GM10248 (cell line): ENCODE measurements at regions of chr19 and their contacts with region 1.

Region 1: GRCh38 chr19:12847159-12848139 is 9.1 kb downstream of the MAST1 start:
- DNase-seq: peak; percentile 93
- CTCF ChIP-seq: peak; percentile 99

Region 2: DNA sequence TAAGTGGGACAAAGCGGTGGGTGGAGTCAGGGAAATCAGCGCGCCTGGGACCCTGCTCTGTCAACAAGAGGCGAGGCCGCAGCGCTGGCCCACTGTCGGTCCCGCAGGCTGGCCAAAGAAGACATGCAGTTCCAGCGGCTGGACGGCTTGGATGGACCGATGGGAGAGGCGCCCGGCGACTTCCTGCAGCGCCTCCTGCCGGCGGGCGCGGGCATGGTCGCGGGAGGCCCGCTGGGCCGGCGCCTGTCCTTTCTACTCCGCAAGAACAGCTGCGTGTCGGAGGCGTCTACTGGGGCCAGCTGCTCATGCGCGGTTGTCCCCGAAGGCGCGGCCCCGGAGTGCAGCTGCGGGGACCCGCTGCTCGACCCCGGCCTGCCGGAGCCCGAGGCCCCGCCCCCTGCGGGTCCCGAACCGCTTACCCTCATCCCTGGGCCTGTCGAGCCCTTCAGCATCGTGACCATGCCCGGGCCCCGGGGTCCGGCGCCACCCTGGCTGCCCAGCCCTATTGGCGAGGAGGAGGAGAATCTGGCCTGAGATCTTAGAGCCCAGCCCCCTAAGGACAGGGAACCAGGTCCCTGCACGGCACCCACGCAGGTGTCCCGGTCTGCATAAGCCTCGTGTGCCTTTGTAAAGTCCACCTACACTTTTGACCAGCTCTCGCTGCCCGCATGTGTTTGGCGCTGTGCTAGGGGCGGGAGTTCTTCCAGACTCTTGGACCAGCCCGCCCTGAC is 89.7 kb before region 1 on chr19:
- CTCF ChIA-PET with region 1: interaction called, 369 read pairs
- POLR2A ChIA-PET with region 1: no interaction called
- DNase-seq: peak; percentile 85
- CTCF ChIP-seq: peak; percentile 82

Region 3: DNA sequence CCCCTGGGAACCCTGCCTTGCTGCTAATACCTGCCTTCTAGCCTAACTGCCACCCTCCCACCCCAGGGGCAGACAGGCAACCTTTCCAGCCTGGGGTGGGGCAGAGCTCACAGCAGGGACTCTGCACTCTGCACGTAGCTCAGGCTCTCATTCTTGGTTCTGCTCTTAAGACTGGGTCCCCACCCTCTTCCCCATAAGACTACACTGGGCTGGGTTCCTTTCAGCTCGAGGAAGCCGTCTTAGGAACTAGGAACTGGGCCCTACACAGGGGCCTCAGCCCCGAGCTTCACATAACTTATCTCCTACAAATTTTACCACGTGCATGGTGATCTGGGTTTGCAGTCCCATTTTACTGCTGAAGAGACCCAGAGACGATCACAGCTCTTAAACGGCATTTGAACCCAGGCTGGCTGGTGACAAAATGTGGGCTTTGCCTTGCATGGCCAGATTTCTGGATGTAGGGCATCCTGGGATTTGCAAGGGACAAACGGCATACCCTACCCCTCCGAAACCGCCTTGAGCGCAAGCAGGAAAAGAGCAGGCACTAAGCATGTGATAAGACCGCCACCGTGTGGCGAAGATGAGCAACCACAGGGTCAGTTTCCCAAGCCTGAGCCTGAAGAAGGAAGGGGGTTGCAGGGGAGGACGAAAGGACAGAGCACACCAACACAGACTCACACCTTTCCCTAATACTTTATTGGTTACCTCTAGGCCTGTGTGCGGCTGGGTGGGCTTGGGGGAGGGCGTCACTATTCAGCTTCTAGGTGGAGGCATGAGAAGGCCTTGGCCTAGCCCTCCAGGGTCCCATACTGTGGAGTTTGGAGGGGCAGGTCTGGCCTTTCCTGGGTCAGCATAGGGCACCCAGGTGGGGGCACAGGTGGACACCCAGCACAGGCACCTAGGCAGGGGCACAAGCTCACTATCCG is 51.0 kb before region 1 on chr19:
- CTCF ChIA-PET with region 1: interaction called, 40 read pairs
- POLR2A ChIA-PET with region 1: interaction called, 4 read pairs
- DNase-seq: peak; percentile 67
- CTCF ChIP-seq: peak; percentile 96

Region 4: GRCh38 chr19:12825254-12826131 is 22.0 kb before region 1 on chr19:
- CTCF ChIA-PET with region 1: interaction called, 22 read pairs
- POLR2A ChIA-PET with region 1: no interaction called
- DNase-seq: no peak
- CTCF ChIP-seq: peak; percentile 47

Region 5: GRCh38 chr19:12867120-12868099 is 20.0 kb after region 1 on chr19:
- CTCF ChIA-PET with region 1: interaction called, 46 read pairs
- POLR2A ChIA-PET with region 1: no interaction called
- DNase-seq: peak; percentile 94
- CTCF ChIP-seq: no peak

Region 6: DNA sequence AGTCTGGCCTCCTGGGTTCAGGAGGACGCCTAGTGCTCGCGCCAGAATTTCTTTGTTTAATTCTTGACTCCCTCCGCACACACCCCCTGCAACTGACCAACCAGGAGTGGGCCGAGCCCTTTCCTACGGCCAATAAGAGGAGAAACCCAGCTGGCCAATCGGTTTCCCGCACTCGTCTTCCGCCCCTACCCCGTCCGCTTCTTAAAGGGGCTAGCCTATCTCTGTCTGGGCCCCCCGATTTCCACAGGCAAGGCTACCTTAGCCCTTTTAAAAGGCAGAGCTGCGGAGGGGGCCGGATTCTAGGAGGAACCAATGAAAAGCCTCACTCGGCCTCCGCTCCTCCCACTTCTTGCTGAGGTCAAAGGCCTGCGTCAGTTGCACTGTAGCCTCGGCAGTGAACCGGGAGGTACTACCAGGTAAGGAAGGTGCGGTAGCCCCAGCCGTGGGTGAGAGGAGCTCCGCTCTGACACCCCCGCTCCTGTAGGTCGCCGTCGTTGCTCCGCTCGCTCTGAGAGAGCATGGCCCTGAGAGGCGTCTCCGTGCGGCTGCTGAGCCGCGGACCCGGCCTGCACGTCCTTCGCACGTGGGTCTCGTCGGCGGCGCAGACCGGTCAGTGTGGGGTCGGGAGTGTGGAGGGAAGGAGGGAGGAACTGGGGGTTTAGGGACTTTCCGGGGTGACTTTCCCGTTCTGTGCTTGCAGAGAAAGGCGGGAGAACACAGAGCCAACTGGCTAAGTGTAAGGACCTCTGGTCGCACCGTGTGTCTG is 43.5 kb after region 1 on chr19 and contains the start of gene GCDH:
- CTCF ChIA-PET with region 1: interaction called, 13 read pairs
- POLR2A ChIA-PET with region 1: no interaction called
- DNase-seq: peak; percentile 97
- CTCF ChIP-seq: no peak